Posterior vena cava (tissue), 2 donors: ENCODE measurements at regions of chr7 and their contacts with region 1.

Region 1: DNA sequence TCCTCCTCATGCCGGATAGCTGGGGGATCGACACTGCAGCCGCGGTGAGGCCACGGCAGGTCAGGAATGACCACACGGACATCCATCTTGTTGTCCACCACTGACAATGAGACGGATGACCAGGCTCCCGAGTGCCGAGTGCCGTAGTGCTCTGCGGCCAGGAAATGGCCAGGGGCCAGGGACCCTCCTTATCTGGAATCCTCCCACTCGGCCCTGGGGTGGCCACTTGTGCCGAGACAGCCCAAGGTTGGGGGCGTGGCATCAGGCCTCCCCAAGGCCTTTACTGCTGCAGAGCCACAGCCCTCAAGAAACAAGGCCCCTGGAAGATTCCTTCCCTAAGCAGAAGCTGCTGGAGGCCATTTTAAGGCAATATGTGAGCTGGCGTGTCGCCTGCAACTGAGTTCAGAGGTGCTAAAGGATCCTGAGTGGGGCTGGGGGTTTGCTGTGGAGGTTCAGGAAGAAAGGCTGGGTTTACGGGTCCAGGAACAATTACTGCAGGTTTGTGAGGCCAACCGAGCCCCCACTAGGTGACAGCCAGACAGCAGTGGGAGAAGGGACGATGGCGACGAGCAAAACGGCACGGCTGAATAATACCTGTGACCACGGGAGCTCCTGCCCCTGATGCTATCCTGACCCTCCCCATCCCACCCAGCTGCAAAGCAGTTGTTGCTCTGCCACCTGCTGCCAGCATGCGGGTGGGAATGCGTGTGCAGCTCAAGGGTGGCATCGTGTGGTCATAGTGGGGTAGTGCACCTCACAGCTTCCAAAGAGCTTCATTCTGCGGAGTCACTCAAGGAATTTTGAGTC is 31.6 kb upstream of the LEP start:
- DNase-seq: peak; percentile 89

Region 2: GRCh38 chr7:127708788-127709187 is 500.6 kb before region 1 on chr7:
- intact Hi-C with region 1: loop called (anchors 5 kb)
- DNase-seq: no peak

Region 3: GRCh38 chr7:128135515-128136214 is 73.8 kb before region 1 on chr7:
- intact Hi-C with region 1: loop called (anchors 5 kb)
- DNase-seq: no peak

Region 4: GRCh38 chr7:128167042-128167691 is 42.3 kb before region 1 on chr7:
- intact Hi-C with region 1: no loop called
- DNase-seq: peak; percentile 81